ENCODE measurements at regions of chr12 and their contacts with region 1.

Region 1: GRCh38 chr12:95820102-95820703 is 29.6 kb upstream of the NTN4 start:
- DNase-seq: peak in 1 of 2 experiments; percentile 57
- H3K4me3 ChIP-seq: no peak overlapping the region
- H3K4me3 Mint-ChIP-seq: no peak overlapping the region
- H3K27ac Mint-ChIP-seq: no peak overlapping the region
- H3K4me1 ChIP-seq: no peaks in the 10 kb centered on the region; the same call in 1 of the 2 replicates
- H3K4me1 Mint-ChIP-seq: no peaks in the 10 kb centered on the region
- H3K27me3 ChIP-seq: no peaks in the 10 kb centered on the region
- H3K27me3 Mint-ChIP-seq: no peaks in the 10 kb centered on the region
- CTCF ChIP-seq: peak; percentile 32 to 61

Region 2: DNA sequence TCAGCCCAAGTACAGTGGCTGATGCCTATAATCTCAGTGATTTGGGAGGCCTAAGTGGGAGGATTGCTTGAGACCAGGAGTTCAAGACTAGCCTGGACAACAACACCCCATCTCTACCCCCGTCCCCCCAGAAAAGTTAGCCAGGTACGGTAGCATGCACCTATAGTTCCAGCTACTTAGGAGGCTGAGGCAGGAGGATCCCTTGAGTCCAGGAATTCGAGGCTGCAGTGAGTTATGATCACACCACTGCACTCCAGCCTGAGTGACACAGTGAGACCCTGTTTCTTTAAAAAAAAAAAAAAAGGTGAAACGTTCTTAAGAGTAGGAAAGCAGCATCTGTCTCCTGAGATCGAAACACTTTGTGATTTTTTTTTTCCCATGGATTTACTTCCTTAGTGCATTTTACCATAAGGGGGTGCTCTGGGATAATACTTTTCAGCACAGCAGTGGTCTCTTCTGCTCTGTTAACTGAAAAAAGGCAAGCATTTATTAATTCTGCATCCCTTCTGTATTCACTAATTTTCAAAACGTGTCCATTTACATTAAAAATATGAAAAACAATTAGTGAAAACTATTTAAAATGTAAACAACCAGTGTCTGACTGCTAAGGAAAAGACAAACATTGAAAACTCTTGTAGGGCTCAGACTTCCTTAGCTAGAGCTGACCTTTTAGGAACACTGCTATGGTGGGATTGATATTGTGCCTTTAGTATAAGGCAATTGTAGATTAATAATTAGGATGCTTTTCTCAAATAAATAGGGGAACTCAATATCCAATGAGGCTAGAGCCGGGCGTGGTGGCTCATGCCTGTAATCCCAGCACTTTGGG is 237.8 kb before region 1 on chr12:
- CTCF ChIA-PET with region 1: interaction called, 5 read pairs
- POLR2A ChIA-PET with region 1: no interaction called
- intact Hi-C with region 1: loop called (anchors 1 kb)
- DNase-seq: peak in 1 of 2 experiments; percentile 40
- H3K4me3 ChIP-seq: no peak overlapping the region
- H3K4me3 Mint-ChIP-seq: no peak overlapping the region
- H3K27ac Mint-ChIP-seq: no peak overlapping the region
- H3K4me1 ChIP-seq: no peaks in the 10 kb centered on the region
- H3K4me1 Mint-ChIP-seq: no peaks in the 10 kb centered on the region
- H3K27me3 ChIP-seq: no peaks in the 10 kb centered on the region
- H3K27me3 Mint-ChIP-seq: no peaks in the 10 kb centered on the region
- CTCF ChIP-seq: peak; percentile 48 to 53

Region 3: DNA sequence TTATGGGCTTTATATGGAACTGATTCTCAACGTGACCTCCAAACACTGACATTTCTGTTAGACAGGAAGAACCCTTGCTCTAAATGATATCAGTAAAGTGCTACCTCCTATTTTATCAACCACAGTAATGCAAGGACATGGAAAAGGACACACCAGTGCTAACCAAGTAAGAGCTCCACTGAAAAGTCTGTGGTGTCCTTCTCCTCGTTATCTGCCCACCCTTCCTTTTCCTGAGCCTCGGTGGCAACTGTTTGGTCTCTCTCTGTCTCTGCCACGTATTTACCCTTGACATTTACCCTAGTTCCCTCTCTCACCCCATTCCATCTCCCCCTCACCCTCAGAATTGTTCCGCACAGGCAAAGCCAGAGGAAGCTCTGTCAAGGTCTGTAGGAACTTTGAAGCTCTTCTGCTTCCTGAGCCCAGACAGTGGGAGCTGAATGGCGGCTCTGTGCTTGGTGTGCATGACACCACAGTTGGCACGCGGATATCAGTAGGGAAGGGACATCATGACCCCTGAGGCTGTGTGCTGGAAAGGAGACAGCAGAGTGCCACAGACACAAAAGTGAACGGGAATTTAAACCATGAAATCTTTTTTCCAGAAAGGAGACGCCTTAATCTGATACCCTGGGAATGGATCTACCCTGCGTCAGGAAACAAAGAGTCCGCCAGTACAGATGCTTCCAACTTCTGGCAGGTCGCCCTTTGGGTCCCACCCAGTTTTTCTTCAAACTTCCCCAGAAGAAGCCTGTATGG is 80.5 kb before region 1 on chr12:
- CTCF ChIA-PET with region 1: no interaction called
- POLR2A ChIA-PET with region 1: no interaction called
- intact Hi-C with region 1: loop called (anchors 2 kb)
- DNase-seq: no peak
- H3K4me3 ChIP-seq: no peak overlapping the region
- H3K4me3 Mint-ChIP-seq: no peak overlapping the region
- H3K27ac Mint-ChIP-seq: peak overlapping the region; percentile 74
- H3K4me1 ChIP-seq: peaks cover 51% of the 10 kb centered on the region
- H3K4me1 Mint-ChIP-seq: peaks cover 33% of the 10 kb centered on the region
- H3K27me3 ChIP-seq: no peaks in the 10 kb centered on the region
- H3K27me3 Mint-ChIP-seq: no peaks in the 10 kb centered on the region
- CTCF ChIP-seq: no peak

Region 4: DNA sequence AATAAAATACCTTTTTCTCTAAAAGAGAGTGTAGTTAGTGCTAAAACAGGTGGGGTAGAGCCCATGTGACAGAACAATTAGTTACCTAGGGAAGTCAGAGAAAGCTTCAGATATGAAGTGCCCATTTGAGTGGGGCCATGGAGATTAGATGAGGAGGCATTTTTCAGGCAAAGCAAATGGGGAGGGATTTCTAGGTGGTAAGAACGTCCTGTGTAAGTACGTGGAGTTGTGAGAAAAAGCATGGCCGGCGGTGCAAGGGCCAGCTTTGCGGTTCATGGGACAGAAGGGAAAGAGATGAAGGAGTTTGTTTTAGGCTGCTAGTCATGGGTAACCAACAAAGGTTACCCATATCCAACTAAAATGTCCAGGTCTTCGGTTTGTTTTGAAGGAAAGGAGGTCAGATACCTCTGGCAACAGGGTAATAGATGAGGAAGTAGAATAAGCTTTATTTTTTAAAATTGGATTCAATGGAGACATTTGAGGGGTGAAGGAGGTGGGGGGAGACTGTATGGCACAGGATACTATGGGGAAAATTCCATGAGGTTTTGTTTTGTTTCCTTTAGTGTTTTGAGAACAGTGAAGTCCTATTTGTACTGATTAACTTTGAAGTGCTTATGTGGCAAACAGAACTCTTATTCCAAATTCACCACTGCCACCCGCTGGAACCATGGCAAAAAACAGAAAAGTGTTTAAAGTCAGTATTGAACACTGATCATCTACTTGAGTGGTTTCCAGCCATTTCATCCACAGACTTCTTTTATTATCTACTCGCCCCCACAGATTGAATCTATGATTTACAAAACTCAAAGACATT is 28.6 kb after region 1 on chr12:
- CTCF ChIA-PET with region 1: no interaction called
- POLR2A ChIA-PET with region 1: no interaction called
- intact Hi-C with region 1: loop called (anchors 1 kb)
- DNase-seq: peak in 1 of 2 experiments; percentile 39
- H3K4me3 ChIP-seq: no peak overlapping the region
- H3K4me3 Mint-ChIP-seq: peak overlapping the region; percentile 50
- H3K27ac Mint-ChIP-seq: no peak overlapping the region
- H3K4me1 ChIP-seq: no peaks in the 10 kb centered on the region
- H3K4me1 Mint-ChIP-seq: peaks cover 7% of the 10 kb centered on the region
- H3K27me3 ChIP-seq: no peaks in the 10 kb centered on the region
- H3K27me3 Mint-ChIP-seq: no peaks in the 10 kb centered on the region
- CTCF ChIP-seq: peak in 1 of 2 experiments; percentile 31

Region 5: GRCh38 chr12:95998611-95999286 is 178.5 kb after region 1 on chr12:
- CTCF ChIA-PET with region 1: no interaction called
- POLR2A ChIA-PET with region 1: no interaction called
- intact Hi-C with region 1: loop called (anchors 2 kb)
- DNase-seq: peak; percentile 55 to 58
- H3K4me3 ChIP-seq: no peak overlapping the region
- H3K4me3 Mint-ChIP-seq: no peak overlapping the region
- H3K27ac Mint-ChIP-seq: no peak overlapping the region
- H3K4me1 ChIP-seq: no peaks in the 10 kb centered on the region; the same call in 1 of the 2 replicates
- H3K4me1 Mint-ChIP-seq: peaks cover 20% of the 10 kb centered on the region
- H3K27me3 ChIP-seq: no peaks in the 10 kb centered on the region
- H3K27me3 Mint-ChIP-seq: no peaks in the 10 kb centered on the region
- CTCF ChIP-seq: peak; percentile 64 to 67